ENCODE measurements at regions of chr12 and their contacts with region 1.

Region 1: GRCh38 chr12:480831-481816 is 21.4 kb downstream of the B4GALNT3 start:
- DNase-seq: peak; percentile 91 to 92
- ATAC-seq: peak; percentile 93
- H3K4me3 ChIP-seq: no peak overlapping the region
- H3K27ac ChIP-seq: peak overlapping the region; percentile 93 to 95
- H3K4me1 ChIP-seq: no peaks in the 10 kb centered on the region
- H3K27me3 ChIP-seq: no peaks in the 10 kb centered on the region

Region 2: DNA sequence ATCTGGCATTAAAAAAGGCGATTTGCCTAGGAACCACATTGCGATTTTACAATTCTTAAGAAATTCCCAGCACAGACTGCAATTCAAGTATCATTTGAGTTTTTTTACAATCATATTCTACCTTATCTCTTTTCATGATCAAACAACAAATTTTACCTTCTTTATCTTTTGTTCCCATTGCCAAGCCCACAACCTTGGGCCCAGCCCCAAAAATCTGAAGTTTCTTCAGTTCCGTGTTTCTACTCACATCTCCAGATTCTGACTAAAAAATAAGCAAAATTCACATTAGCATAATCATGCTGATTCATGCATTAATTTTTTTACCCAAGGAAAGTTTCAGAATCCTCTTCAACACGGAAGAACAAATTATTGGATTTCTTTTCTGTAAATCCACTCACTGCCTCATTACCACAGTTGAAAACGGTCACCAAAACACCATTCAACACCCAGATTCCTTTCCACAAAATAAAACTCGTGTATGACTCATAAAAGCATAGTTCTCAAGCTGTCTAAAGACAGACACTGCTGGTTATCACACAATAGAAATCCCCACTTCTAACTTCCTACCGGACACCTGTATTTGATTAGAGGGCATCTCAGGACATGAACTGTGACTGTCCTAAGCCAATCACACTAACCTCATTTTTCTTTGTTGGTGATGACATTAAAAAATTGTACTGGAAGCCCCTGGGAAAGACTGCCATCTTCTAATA is 124.7 kb before region 1 on chr12:
- intact Hi-C with region 1: no loop called
- DNase-seq: no peak
- ATAC-seq: no peak
- H3K4me3 ChIP-seq: no peak overlapping the region
- H3K27ac ChIP-seq: no peak overlapping the region
- H3K4me1 ChIP-seq: no peaks in the 10 kb centered on the region
- H3K27me3 ChIP-seq: no peaks in the 10 kb centered on the region

Region 3: DNA sequence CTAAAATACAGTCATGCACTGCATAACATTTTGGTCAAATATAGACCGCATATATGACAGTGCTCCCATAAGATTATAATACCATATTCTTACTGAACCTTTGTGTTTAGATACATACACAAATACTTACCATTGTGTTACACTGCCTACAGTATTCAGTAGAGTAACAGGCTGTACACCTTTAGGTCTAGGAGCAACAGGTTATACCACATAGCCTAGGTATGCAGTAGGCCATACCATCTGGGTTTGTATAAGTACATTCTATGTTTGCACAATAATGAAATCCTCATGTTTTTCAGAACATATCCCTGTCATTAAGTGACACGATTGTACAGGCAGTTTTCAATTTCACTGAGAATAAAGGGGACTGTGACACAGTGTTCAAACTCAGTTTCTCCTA is 114.3 kb before region 1 on chr12:
- intact Hi-C with region 1: no loop called
- DNase-seq: no peak
- ATAC-seq: no peak
- H3K4me3 ChIP-seq: no peak overlapping the region
- H3K27ac ChIP-seq: no peak overlapping the region
- H3K4me1 ChIP-seq: no peaks in the 10 kb centered on the region
- H3K27me3 ChIP-seq: no peaks in the 10 kb centered on the region

Region 4: DNA sequence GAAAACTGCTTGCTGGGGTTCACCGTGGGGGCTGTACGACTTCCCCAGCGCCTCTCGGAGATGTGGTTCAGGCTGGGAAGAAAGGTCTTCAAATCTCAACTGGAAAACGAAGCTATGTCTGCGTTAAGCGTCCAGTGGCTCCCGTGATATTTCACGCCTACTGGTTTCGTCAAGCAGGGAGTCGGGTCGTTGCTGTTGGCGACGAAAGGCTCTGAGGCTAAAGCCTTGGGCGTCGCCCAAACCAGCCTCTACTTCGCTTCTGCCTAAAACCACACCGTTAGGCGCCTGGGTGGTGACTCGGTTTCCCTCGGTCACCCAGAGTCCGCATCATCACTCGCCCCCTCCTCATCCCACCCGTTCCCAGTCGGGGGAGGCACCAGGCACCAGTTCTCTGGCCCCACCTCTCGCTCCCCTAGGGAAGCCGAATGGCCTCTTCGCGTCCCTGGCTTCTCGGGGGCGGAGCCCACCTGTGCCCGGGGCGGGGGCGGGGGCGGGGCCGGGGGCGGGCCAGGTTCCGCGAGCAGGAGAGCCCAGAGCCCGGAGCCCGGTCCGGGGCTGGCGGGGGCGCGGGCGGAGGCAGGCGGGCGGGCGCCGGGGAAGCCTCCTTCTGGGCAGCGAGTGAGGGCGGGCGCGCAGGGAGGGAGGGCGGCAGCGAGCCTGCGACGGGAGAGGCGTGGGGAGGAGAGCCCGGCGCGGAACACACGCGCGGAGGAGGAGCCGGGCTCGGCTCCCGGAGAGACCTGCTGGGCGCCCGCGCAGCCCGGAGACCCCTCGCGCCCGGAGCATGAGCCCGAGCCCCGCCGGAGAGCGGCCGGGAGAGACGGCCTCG is 21.5 kb before region 1 on chr12 and contains the start of gene B4GALNT3:
- intact Hi-C with region 1: loop called in 1 of 2 experiments (anchors 2 kb)
- DNase-seq: peak; percentile 80 to 87
- ATAC-seq: peak; percentile 73
- H3K4me3 ChIP-seq: peak within 1 kb of the TSS; percentile 93 to 96
- H3K27ac ChIP-seq: peak within 1 kb of the TSS; percentile 55 to 68
- H3K4me1 ChIP-seq: no peaks in the 10 kb centered on the region
- H3K27me3 ChIP-seq: no peaks in the 10 kb centered on the region
- total RNA-seq, gene B4GALNT3: 17.4 to 29.9 TPM

Region 5: GRCh38 chr12:466039-466438 is 15.1 kb before region 1 on chr12:
- intact Hi-C with region 1: loop called (anchors 2 kb)
- DNase-seq: peak; percentile 70 to 79
- ATAC-seq: peak; percentile 80
- H3K4me3 ChIP-seq: no peak overlapping the region
- H3K27ac ChIP-seq: peak overlapping the region; percentile 28 to 36
- H3K4me1 ChIP-seq: no peaks in the 10 kb centered on the region
- H3K27me3 ChIP-seq: no peaks in the 10 kb centered on the region

Region 6: DNA sequence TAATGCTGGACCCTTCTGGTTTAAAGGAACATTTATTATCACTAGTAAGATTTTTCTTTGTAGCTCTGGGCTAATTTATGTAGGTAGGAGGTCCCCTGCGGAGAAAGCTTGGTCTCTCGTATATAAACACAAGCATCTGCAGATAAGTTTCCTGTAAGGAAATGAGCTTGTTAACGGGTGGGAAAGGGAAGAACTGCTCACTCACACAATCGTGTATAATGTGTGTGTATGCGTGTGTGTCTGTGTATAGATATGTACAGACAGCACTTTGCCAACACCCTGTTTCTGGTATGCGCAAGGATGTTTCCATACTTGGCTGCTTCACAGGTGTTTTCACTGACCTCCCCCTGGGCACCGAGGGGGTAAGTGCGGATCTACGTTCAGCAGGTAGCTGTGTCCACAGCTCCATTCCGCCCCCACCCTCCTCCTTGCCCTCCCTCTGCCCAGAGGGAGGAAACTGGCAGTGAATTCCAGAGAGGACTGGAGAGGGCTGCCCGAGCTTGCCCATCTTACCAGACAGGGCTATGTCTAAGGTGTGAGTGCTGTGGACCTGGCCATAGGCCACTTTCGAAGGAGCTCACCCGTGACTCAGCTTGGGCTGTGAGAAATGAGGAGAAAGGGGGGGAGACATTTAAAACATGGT is 116.9 kb after region 1 on chr12:
- intact Hi-C with region 1: no loop called
- DNase-seq: no peak
- ATAC-seq: no peak
- H3K4me3 ChIP-seq: no peak overlapping the region
- H3K27ac ChIP-seq: no peak overlapping the region
- H3K4me1 ChIP-seq: no peaks in the 10 kb centered on the region
- H3K27me3 ChIP-seq: no peaks in the 10 kb centered on the region